GM13977 (cell line): ENCODE measurements at regions of chr11 and their contacts with region 1.

Region 1: GRCh38 chr11:44936525-44936924 is 14.2 kb downstream of the TP53I11 start:
- DNase-seq: peak; percentile 88
- CTCF ChIP-seq: peak; percentile 93

Region 2: DNA sequence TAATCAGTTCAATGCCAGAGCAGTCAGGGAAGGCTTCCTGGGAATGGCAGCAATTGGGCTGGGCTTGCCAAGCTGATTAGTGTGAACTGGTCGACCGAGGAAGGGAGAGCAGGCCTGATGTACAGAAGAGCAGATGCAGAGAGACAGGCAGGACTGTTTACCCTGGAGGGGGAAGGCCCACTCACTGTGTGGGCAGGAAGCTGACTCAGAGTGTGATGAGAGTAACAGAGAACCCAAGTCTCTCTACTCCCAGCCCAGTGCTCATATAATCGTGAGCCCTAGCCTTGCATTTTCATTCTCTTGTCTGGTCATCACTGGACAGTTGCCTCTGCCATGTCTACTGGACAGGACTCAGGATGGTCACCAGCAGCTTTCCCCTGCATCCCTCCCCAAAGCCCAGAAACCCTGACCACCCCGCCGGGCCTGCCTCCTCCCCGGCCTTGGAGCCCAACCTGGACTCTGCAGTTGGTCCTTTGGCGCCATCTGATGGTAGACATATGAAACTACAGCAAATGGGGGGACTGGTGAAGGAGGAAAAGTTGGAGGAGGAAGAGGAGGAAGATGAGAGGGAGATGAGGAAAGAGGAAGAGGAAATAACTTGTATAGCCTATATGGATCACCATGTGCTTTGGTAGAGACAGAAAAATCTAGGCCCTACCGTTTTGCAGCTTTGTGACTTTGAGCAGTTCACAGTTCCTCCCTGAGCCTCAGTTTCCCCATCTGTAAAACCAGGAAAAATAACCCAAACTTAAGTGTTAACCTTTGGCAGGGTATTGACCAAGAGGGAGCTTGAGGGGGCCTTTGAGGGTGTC is 166.5 kb after region 1 on chr11:
- in situ Hi-C with region 1: loop called (anchors 5 kb)
- DNase-seq: peak; percentile 81
- CTCF ChIP-seq: peak; percentile 90

Region 3: GRCh38 chr11:45322891-45323600 is 386.5 kb after region 1 on chr11:
- in situ Hi-C with region 1: loop called (anchors 25 kb)
- DNase-seq: no peak
- CTCF ChIP-seq: no peak